ENCODE measurements at regions of chr2 and their contacts with region 1.

Region 1: DNA sequence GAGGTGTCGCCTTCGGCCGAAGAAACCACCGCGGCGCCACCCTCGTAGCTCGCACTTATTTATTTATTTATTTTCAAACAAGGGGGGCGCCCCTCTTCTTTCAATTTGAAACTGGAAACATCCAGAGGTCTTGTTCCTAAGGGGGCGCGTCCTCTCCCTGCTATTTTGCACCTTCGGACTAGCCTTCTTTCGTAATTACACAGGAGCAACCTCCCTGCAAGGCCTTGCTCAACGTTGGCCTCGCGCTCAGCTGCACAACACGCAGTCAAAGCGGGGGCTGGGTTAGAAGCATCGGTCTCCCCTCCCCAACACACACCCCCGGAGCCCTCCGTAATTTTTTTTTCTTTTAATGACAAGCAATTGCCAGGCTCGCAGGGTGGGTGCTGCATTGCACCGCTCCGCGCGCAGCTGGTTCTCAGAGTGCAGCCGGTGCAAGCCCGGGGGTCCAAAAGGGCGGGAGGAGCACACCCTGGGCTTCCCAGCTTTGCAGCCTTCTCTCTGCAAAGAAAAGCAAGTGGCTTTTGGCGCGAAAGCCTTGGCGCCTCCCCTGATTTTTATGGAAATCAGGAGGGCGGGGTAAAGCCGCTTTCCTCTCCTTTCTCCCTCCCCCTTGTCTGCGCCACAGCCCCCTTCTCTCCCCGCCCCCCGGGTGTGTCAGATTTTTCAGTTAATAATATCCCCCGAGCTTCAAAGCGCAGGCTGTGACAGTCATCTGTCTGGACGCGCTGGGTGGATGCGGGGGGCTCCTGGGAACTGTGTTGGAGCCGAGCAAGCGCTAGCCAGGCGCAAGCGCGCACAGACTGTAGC is at the start of gene MYCN:
- DNase-seq: peak; percentile 42
- H3K4me3 ChIP-seq: peak within 1 kb of the TSS; percentile 3 to 66 (median 41)
- H3K27ac ChIP-seq: peak within 1 kb of the TSS in 1 of 4 donors; percentile 55
- H3K4me1 ChIP-seq: peaks cover 12 to 52% (median 35%) of the 10 kb centered on the region in 4 donors
- H3K27me3 ChIP-seq: peaks cover 42% of the 10 kb centered on the region
- CTCF ChIP-seq: peak; percentile 64 to 73 (median 69)
- EP300 ChIP-seq: no peak
- POLR2A ChIP-seq: no peak
- total RNA-seq, gene MYCN: 0.48 to 7.0 (median 0.82) TPM in 3 of 4 donors, not detected in the other

Region 2: GRCh38 chr2:16281451-16282336 is 341.6 kb after region 1 on chr2:
- in situ Hi-C with region 1: loop called in 3 of 4 experiments (anchors 10 to 25 kb)
- intact Hi-C with region 1: no loop called
- DNase-seq: no peak
- H3K4me3 ChIP-seq: no peak overlapping the region
- H3K27ac ChIP-seq: no peak overlapping the region
- H3K4me1 ChIP-seq: no peaks in the 10 kb centered on the region
- H3K27me3 ChIP-seq: no peaks in the 10 kb centered on the region
- CTCF ChIP-seq: peak; percentile 32 to 50 (median 45)
- EP300 ChIP-seq: no peak
- POLR2A ChIP-seq: no peak

Region 3: DNA sequence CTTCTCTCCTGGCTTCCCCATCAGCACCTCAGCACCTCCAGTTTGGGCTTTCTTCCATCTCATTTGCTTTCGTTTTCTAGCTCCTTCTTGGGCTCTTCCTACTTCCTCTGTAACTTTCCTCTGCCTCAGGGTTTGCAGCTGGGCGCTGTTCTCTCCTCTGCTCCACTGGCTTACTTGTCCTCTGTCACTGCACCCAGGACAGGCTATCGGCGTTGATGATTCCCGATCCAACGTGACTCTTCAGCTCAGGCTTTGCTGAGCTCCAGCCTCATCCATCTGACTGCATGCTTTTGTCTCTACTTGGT is 363.2 kb after region 1 on chr2:
- in situ Hi-C with region 1: loop called in 2 of 4 experiments (anchors 25 kb)
- intact Hi-C with region 1: loop called (anchors 10 kb)
- DNase-seq: no peak
- H3K4me3 ChIP-seq: no peak overlapping the region
- H3K27ac ChIP-seq: no peak overlapping the region
- H3K4me1 ChIP-seq: no peaks in the 10 kb centered on the region
- H3K27me3 ChIP-seq: no peaks in the 10 kb centered on the region
- CTCF ChIP-seq: no peak
- EP300 ChIP-seq: no peak
- POLR2A ChIP-seq: no peak

Region 4: GRCh38 chr2:16487686-16488085 is 547.6 kb after region 1 on chr2:
- in situ Hi-C with region 1: loop called in 2 of 4 experiments (anchors 10 to 25 kb)
- intact Hi-C with region 1: no loop called
- DNase-seq: no peak
- H3K4me3 ChIP-seq: no peak overlapping the region
- H3K27ac ChIP-seq: no peak overlapping the region
- H3K4me1 ChIP-seq: no peaks in the 10 kb centered on the region
- H3K27me3 ChIP-seq: no peaks in the 10 kb centered on the region
- CTCF ChIP-seq: peak in 3 of 5 experiments; percentile 23 to 30 (median 27)
- EP300 ChIP-seq: no peak
- POLR2A ChIP-seq: no peak

Region 5: GRCh38 chr2:16507655-16508489 is 567.8 kb after region 1 on chr2:
- in situ Hi-C with region 1: loop called in 2 of 4 experiments (anchors 25 kb)
- intact Hi-C with region 1: no loop called
- DNase-seq: peak; percentile 43
- H3K4me3 ChIP-seq: peak overlapping the region; percentile 23 to 51 (median 30)
- H3K27ac ChIP-seq: no peak overlapping the region
- H3K4me1 ChIP-seq: peaks cover 0 to 10% (median 9%) of the 10 kb centered on the region in 4 donors
- H3K27me3 ChIP-seq: peaks cover 43% of the 10 kb centered on the region
- CTCF ChIP-seq: peak; percentile 36 to 74 (median 65)
- EP300 ChIP-seq: no peak
- POLR2A ChIP-seq: no peak

Measured in transverse colon (tissue), 4 donors.